ENCODE measurements at regions of chr4 and their contacts with region 1.

Region 1: DNA sequence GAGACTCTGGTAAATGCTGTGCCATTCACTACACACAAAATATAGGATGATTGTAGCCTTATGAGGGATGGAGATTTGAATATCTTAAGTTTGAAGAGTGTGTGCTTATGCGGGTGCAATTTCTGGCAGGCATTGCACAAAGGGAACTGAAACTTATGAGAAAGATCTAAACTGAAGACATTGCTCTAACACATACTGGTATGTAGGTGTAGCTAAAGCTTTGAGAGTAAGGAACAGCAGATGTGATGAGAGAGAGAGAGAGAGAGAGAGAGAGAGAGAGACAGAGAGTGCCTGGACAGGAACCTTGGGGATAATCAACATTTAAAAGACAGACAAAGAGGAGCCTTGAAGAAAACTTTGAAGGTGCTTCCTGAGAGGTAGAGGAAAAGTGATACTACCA is 379.7 kb downstream of the SPRY1 start:
- DNase-seq: no peak
- H3K4me3 ChIP-seq: no peak overlapping the region
- H3K27ac ChIP-seq: no peak overlapping the region
- H3K4me1 ChIP-seq: no peaks in the 10 kb centered on the region
- H3K27me3 ChIP-seq: no peaks in the 10 kb centered on the region
- CTCF ChIP-seq: no peak
- POLR2A ChIP-seq: no peak

Region 2: GRCh38 chr4:123102897-123103471 is 673.3 kb before region 1 on chr4:
- intact Hi-C with region 1: loop called (anchors 10 kb)
- DNase-seq: no peak
- H3K4me3 ChIP-seq: no peak overlapping the region
- H3K27ac ChIP-seq: no peak overlapping the region
- H3K4me1 ChIP-seq: no peaks in the 10 kb centered on the region
- H3K27me3 ChIP-seq: no peaks in the 10 kb centered on the region
- CTCF ChIP-seq: peak; percentile 58 to 81 (median 67)
- POLR2A ChIP-seq: no peak